ENCODE measurements at regions of chr4 and their contacts with region 1.

Region 1: GRCh38 chr4:42066402-42066801 is 76.1 kb downstream of the SLC30A9 start:
- DNase-seq: no peak
- H3K4me3 ChIP-seq: no peak overlapping the region
- H3K27ac ChIP-seq: no peak overlapping the region
- H3K4me1 ChIP-seq: no peaks in the 10 kb centered on the region
- CTCF ChIP-seq: no peak

Region 2: GRCh38 chr4:42078184-42078801 is 11.9 kb after region 1 on chr4:
- CTCF ChIA-PET with region 1: no interaction called
- POLR2A ChIA-PET with region 1: interaction called, 5 read pairs
- intact Hi-C with region 1: loop called (anchors 2 kb)
- DNase-seq: no peak
- H3K4me3 ChIP-seq: no peak overlapping the region
- H3K27ac ChIP-seq: no peak overlapping the region
- H3K4me1 ChIP-seq: no peaks in the 10 kb centered on the region
- CTCF ChIP-seq: no peak